T-cell (primary cell): ENCODE measurements at regions of chr6 and their contacts with region 1.

Region 1: DNA sequence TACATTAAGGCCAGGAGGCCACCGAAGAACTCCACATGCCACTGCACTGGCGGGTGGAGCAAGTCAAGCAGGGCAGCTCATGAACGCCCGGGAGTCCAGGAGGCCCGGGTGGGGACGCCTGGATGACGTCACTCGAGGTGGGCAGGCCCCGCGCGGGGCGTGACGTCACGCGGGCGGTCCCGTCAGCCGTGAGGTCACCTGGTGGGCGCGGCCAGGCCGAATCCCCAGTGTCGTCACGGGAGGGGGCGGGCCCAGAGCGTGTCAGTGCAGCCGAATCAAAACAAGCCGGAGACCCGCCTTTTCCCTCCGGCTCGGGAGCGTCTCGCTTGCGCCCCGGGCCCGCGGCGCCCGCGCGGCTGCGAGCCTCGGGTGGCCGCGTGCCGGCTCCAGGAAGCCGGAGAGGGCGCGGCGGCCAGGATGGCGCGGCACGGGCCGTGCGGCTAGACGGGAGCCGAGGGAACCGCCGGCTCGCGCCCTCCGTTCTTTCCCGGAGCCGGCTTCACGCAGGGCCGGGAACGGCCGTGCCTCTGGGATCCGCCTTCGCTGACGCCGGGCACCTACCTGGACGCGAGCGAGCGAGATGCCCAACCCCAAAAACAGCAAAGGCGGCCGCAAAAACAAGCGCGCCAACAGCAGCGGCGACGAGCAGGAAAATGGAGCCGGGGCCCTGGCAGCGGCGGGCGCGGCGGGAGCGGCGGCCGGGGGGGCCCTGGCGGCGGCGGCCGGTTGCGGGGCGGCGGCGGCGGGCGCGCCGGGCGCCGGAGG is at the start of gene HECA:
- DNase-seq: peak; percentile 96 to 100 (median 99)
- ATAC-seq: peak; percentile 80 to 86 (median 84)
- H3K4me3 ChIP-seq: peak within 1 kb of the TSS; percentile 80 to 91
- H3K4me3 Mint-ChIP-seq: peak within 1 kb of the TSS; percentile 83 to 98 (median 87)
- H3K27ac ChIP-seq: peak within 1 kb of the TSS; percentile 93
- H3K27ac Mint-ChIP-seq: peak within 1 kb of the TSS; percentile 97 to 99
- H3K4me1 ChIP-seq: peaks cover 23 to 24% of the 10 kb centered on the region in 2 experiments
- H3K4me1 Mint-ChIP-seq: peaks cover 53 to 76% (median 68%) of the 10 kb centered on the region in 3 donors
- H3K27me3 ChIP-seq: no peaks in the 10 kb centered on the region
- H3K27me3 Mint-ChIP-seq: no peaks in the 10 kb centered on the region
- total RNA-seq, gene HECA: 125 to 137 (median 131) TPM

Region 2: DNA sequence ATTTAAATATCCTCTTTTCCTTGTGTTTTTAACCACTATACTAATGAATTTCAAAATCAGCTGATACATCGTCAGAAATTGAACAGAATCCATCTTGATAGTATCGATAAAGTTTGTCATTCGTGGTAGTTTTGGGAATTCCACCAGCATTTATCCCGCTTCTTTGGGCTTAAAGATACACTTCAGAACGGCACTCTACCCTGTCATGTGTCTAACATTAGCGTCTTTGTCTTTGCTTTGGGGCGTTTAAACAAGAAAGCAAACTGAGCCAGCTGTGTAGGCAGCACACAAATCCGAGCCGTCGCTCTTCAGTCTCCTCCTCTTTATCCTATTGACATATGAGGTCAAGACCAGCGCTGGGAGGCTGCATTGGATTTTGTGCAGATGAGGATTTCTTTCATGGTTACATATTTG is 608.2 kb before region 1 on chr6:
- CTCF ChIA-PET with region 1: no interaction called
- POLR2A ChIA-PET with region 1: no interaction called
- DNase-seq: no peak
- ATAC-seq: no peak
- H3K4me3 ChIP-seq: no peak overlapping the region
- H3K4me3 Mint-ChIP-seq: no peak overlapping the region
- H3K27ac ChIP-seq: no peak overlapping the region
- H3K27ac Mint-ChIP-seq: no peak overlapping the region
- H3K4me1 ChIP-seq: no peaks in the 10 kb centered on the region
- H3K4me1 Mint-ChIP-seq: peaks cover 0 to 1% (median 0%) of the 10 kb centered on the region in 3 donors
- H3K27me3 ChIP-seq: no peaks in the 10 kb centered on the region
- H3K27me3 Mint-ChIP-seq: peaks cover 5 to 9% of the 10 kb centered on the region in 2 donors

Region 3: GRCh38 chr6:139099984-139100383 is 35.0 kb before region 1 on chr6:
- CTCF ChIA-PET with region 1: no interaction called
- POLR2A ChIA-PET with region 1: no interaction called
- DNase-seq: no peak
- ATAC-seq: no peak
- H3K4me3 ChIP-seq: no peak overlapping the region
- H3K4me3 Mint-ChIP-seq: no peak overlapping the region
- H3K27ac ChIP-seq: no peak overlapping the region
- H3K27ac Mint-ChIP-seq: peak overlapping the region in 1 of 2 donors; percentile 3
- H3K4me1 ChIP-seq: no peaks in the 10 kb centered on the region
- H3K4me1 Mint-ChIP-seq: peaks cover 6 to 10% (median 9%) of the 10 kb centered on the region in 3 donors
- H3K27me3 ChIP-seq: peaks cover 0 to 5% of the 10 kb centered on the region in 2 experiments
- H3K27me3 Mint-ChIP-seq: no peaks in the 10 kb centered on the region

Region 4: DNA sequence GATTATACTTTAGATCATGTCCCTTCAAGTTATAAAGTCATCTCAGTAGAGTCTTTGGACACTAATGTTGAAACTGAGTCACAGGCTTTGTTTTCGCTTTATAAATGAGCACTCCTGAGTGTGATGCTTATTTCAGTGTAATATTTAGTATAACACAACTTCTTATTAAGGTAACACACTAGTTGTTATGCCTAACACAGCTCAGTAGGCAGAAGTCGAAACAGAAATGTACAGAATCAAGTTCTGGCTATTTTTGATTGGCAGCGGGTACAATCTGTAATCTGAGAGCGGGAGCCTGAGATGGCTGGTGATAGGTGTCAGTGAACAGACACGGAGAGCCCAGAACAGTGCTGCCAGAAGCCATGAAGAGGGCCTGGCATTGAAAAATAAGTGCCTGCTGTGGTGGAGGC is 11.3 kb after region 1 on chr6:
- CTCF ChIA-PET with region 1: interaction called, 9 to 11 read pairs
- POLR2A ChIA-PET with region 1: interaction called, 14 to 40 read pairs
- DNase-seq: no peak
- ATAC-seq: peak; percentile 31 to 49 (median 34)
- H3K4me3 ChIP-seq: peak overlapping the region in 1 of 2 donors; percentile 26
- H3K4me3 Mint-ChIP-seq: peak overlapping the region; percentile 69 to 83 (median 72)
- H3K27ac ChIP-seq: peak overlapping the region; percentile 36
- H3K27ac Mint-ChIP-seq: peak overlapping the region; percentile 90 to 92
- H3K4me1 ChIP-seq: peaks cover 67 to 72% of the 10 kb centered on the region in 2 experiments
- H3K4me1 Mint-ChIP-seq: peaks cover 93 to 95% (median 94%) of the 10 kb centered on the region in 3 donors
- H3K27me3 ChIP-seq: no peaks in the 10 kb centered on the region
- H3K27me3 Mint-ChIP-seq: no peaks in the 10 kb centered on the region

Region 5: GRCh38 chr6:139161817-139162284 is 26.9 kb after region 1 on chr6:
- CTCF ChIA-PET with region 1: interaction called, 4 to 8 read pairs
- POLR2A ChIA-PET with region 1: interaction called, 8 to 21 read pairs
- DNase-seq: peak; percentile 32 to 78 (median 56)
- ATAC-seq: peak; percentile 60 to 69 (median 67)
- H3K4me3 ChIP-seq: peak overlapping the region; percentile 2 to 25
- H3K4me3 Mint-ChIP-seq: peak overlapping the region; percentile 72 to 82 (median 75)
- H3K27ac ChIP-seq: peak overlapping the region; percentile 66
- H3K27ac Mint-ChIP-seq: peak overlapping the region; percentile 96 to 97
- H3K4me1 ChIP-seq: peaks cover 58 to 91% of the 10 kb centered on the region in 2 experiments
- H3K4me1 Mint-ChIP-seq: peaks cover 93 to 96% (median 94%) of the 10 kb centered on the region in 3 donors
- H3K27me3 ChIP-seq: no peaks in the 10 kb centered on the region
- H3K27me3 Mint-ChIP-seq: no peaks in the 10 kb centered on the region

Region 6: GRCh38 chr6:139236105-139236504 is 101.1 kb after region 1 on chr6:
- CTCF ChIA-PET with region 1: no interaction called
- POLR2A ChIA-PET with region 1: no interaction called
- DNase-seq: no peak
- ATAC-seq: no peak
- H3K4me3 ChIP-seq: no peak overlapping the region
- H3K4me3 Mint-ChIP-seq: no peak overlapping the region
- H3K27ac ChIP-seq: no peak overlapping the region
- H3K27ac Mint-ChIP-seq: no peak overlapping the region
- H3K4me1 ChIP-seq: no peaks in the 10 kb centered on the region
- H3K4me1 Mint-ChIP-seq: peaks cover 6 to 8% (median 6%) of the 10 kb centered on the region in 3 donors
- H3K27me3 ChIP-seq: no peaks in the 10 kb centered on the region
- H3K27me3 Mint-ChIP-seq: no peaks in the 10 kb centered on the region

Region 7: GRCh38 chr6:139364302-139364981 is 229.4 kb after region 1 on chr6:
- CTCF ChIA-PET with region 1: interaction called, 6 to 16 read pairs
- POLR2A ChIA-PET with region 1: interaction called, 3 to 14 read pairs
- DNase-seq: peak in 2 of 35 experiments; percentile 18 to 73
- ATAC-seq: peak; percentile 33 to 62 (median 53)
- H3K4me3 ChIP-seq: no peak overlapping the region
- H3K4me3 Mint-ChIP-seq: no peak overlapping the region
- H3K27ac ChIP-seq: no peak overlapping the region
- H3K27ac Mint-ChIP-seq: peak overlapping the region in 1 of 2 donors; percentile 58
- H3K4me1 ChIP-seq: peaks cover 0 to 19% of the 10 kb centered on the region in 2 experiments
- H3K4me1 Mint-ChIP-seq: peaks cover 35 to 53% (median 48%) of the 10 kb centered on the region in 3 donors
- H3K27me3 ChIP-seq: no peaks in the 10 kb centered on the region
- H3K27me3 Mint-ChIP-seq: no peaks in the 10 kb centered on the region